Posterior vena cava (tissue), 2 donors: ENCODE measurements at regions of chr12 and their contacts with region 1.

Region 1: DNA sequence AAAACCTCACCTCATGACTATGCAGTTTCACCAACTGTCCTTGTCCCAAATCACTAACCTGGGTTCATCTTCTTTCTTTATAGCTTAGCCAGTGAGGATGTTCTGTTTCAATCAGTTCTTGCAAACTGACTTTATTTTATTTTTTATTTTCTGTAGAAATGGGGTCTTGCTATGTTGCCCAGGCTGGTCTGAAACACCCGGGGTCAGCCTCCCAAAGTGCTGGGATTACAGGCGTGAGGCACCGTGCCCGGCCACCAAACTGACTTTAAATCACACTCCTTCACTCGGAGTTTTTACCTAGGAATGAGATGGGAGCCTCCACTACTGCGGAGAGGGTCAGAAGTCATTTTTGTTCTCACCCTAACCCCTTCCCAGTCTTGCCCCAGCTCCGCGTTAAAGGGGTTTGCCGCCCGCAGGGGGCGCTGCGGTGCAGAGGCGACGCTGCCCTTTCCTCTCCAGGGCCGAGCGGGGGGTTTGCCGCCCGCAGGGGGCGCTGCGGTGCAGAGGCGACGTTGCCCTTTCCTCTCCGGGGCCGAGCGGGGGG is 7.0 kb upstream of the B4GALNT3 start:
- DNase-seq: no peak

Region 2: DNA sequence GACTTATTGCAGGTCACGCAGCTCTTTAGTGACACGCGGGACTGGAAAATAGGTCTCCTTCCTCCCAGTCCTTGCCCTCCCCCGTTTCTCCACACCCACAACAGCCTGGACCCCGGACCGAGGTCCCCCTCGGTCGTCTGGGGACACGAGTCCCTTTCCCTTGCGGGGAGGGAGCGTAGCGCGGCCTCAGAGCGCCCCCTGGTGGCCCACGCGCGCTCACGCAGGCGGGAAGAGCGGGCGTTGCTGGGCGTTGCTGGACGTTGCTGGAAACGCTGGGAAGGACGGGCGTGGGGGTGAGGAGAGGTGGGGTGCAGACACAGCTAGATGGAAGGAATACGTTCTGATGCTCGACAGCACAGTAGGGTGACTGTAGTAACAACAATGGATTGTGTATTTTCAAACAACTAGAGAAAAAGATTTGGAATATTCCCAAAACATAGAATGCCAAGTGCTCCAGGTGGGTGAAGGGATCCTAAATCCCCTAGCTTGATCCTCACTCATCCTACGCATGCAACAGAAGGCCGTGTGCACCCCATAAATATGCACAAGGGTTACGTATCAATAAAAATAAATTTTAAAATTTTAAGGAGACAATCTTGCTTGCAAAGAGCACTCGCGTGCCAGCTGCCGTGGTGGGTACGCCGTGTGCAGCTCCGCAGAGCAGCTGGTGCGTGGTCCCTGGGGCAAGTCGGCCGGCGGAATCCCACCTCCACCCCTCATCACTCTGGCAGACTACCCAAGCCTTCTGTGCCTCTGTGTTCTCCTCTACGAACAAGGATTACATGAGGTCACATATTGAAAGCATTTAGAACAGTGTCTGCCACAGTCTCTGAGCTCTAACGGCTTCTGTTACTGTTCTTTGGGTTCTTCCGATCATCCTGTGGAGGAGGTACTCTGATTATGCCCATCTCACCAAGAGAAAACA is 94.4 kb after region 1 on chr12:
- intact Hi-C with region 1: loop called (anchors 5 kb)
- DNase-seq: peak; percentile 91

Region 3: GRCh38 chr12:1117970-1118563 is 665.3 kb after region 1 on chr12:
- intact Hi-C with region 1: no loop called
- DNase-seq: peak; percentile 87